ENCODE measurements at regions of chr2 and their contacts with region 1.

Region 1: DNA sequence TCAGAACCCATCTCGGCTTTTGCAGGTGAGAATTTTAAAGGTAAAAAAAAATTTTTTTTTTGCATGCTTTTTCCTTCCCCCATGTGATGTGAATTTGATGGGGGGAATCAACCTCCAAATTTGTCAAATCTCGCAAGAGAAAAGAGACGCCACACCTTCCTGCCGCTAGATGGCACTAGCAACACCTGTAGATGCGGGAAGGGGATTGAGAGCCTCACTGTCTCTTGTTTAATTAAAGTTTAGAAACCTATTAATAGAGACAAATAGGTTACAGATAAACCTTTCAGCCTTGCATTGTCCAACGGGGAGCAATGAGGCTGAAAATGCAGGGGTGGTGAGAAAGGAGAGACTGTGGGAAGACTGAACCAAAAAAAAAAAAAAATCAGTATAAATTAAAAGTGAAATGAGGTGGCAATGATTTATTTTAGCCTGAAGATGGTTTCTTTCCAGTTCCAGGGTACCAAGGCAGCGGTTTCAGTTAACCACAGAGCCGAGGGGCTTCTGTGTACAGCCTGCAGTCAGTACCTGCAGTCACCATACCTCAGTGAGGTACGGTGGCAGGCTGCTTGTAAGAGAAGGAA is 84.6 kb downstream of the NRP2 start:
- DNase-seq: peak; percentile 17
- H3K4me3 Mint-ChIP-seq: no peak overlapping the region
- H3K27ac Mint-ChIP-seq: no peak overlapping the region
- H3K4me1 Mint-ChIP-seq: no peaks in the 10 kb centered on the region
- H3K27me3 Mint-ChIP-seq: peaks cover 42% of the 10 kb centered on the region

Region 2: GRCh38 chr2:205451901-205452512 is 314.9 kb before region 1 on chr2:
- intact Hi-C with region 1: no loop called
- DNase-seq: no peak
- H3K4me3 Mint-ChIP-seq: no peak overlapping the region
- H3K27ac Mint-ChIP-seq: no peak overlapping the region
- H3K4me1 Mint-ChIP-seq: no peaks in the 10 kb centered on the region
- H3K27me3 Mint-ChIP-seq: peaks cover 3% of the 10 kb centered on the region

Region 3: DNA sequence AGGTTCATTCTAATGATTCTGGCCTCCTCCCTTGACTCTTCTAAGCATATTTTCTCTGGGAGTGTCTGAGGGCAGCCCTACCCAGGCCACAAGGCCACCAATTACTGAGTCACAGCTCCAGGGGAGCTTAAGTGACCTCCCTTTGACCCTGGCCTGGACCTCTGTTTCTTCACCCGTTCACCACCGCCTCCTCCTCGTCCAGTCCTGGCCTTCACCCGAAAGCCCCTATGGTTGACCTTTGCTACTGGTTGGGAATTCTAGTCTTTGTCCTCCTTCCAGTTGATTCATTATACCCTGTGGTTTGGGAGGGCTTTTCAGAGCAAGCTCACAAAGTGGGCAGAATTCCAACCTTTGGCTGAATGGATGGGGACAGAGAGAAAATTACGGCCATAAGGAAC is 11.9 kb before region 1 on chr2:
- intact Hi-C with region 1: no loop called
- DNase-seq: no peak
- H3K4me3 Mint-ChIP-seq: no peak overlapping the region
- H3K27ac Mint-ChIP-seq: no peak overlapping the region
- H3K4me1 Mint-ChIP-seq: no peaks in the 10 kb centered on the region
- H3K27me3 Mint-ChIP-seq: peaks cover 2% of the 10 kb centered on the region

Region 4: DNA sequence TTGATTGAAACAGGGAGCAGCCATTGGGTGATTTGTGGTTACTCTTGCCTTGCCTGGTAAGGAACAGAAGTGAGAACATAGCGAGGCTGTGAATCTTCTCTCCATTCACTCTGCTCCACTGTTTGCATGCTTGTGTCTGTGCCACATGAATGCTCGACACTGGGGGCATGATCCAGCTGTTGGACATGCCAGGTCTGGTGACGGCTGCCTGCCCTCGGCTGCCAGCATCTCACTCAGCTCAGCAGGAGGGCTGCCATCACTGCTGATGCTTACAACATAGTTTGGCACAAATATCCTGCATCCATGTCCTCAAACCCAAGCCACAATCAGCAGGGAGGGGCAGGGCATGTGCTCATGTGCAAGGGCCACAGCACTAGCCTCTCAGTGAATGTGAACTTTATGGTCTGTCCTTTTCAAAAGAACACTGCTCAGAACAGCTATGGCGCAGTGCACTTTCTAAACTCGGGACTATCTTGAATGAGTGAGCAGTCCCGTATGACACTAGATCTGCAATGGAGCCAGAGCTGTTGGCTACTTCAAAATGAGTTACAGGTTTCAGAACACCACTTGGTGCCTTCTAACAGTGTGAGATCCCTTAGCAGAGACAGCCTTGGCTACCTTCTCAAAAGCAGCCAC is 41.7 kb after region 1 on chr2:
- intact Hi-C with region 1: loop called (anchors 1 kb)
- DNase-seq: no peak
- H3K4me3 Mint-ChIP-seq: no peak overlapping the region
- H3K27ac Mint-ChIP-seq: no peak overlapping the region
- H3K4me1 Mint-ChIP-seq: no peaks in the 10 kb centered on the region
- H3K27me3 Mint-ChIP-seq: peaks cover 12% of the 10 kb centered on the region

Region 5: DNA sequence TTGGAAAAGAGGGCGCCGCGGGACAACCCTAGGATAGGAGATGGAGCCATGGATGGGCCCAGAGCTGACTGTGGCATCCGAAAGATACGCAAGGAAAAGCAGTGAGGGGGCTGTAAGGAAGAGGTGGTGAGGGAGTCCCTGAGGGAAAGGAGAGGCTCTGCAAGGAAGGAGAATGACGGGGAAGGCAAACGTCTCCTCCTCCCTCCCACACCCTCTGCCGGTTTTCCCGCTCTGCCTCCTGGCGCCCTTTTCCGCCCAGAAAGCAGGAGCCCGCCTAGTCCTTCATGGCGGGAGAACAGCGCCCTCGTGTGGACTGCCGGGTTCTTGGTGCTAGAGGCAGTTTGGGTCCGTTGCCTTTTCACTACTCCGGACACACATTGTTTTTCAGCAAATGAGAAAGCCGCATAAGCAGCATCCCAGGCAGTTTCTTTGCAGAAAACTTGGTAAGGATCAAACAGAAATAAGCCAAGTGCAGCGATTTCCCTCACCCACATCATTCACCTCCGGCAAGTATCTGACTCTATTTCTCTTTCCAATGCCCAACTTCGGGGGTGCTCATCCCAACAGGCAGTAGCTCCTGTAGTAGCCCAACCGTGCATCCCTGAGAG is 118.7 kb after region 1 on chr2:
- intact Hi-C with region 1: loop called (anchors 1 kb)
- DNase-seq: peak; percentile 37
- H3K4me3 Mint-ChIP-seq: no peak overlapping the region
- H3K27ac Mint-ChIP-seq: no peak overlapping the region
- H3K4me1 Mint-ChIP-seq: peaks cover 8% of the 10 kb centered on the region
- H3K27me3 Mint-ChIP-seq: peaks cover 10% of the 10 kb centered on the region

Region 6: DNA sequence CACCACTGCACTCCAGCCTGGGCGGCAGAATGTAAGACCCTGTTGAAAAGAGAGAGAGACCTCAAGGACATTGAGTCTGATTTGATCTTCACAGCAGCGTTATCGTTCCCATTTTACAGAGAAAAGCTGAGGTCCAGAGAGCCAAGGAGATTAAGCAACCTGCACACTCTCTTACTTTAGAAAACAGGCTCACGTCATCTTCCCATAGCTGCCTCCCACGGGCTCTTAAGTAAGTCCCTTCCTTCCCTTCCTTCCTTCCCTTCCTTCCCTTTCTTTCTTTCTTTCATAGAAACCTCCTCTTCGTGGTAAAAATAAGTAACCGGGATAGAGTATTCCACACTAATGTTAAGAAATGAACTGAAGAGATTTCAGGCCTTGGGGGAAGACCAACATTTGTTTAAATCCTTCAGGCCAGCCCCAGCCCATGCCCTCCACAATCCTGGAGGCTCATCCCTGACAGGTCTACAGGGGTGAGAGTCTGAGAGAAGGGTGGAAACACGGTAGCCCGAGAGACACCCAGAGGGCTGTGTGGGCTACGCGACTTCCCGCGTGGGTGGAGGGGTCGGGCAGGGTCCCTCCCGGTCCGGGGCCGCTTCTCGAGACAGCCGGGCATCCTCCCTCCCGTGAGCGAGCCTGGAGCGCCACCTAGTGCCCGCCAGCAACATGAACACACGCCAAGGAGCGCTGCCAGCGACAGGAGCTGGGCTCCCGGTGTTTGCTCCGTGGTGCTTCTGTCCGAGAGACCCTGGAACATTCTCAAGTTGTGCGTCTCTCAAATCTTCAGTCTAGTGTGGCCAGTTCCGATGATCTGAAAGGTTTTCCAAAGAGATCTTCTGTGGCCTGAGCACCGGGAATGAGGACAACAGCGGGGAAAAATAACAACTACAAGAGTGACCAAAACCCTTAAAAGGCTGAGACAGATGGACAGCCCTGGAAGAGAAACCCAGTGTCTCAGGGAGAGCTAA is 158.8 kb after region 1 on chr2:
- intact Hi-C with region 1: loop called (anchors 1 kb)
- DNase-seq: peak; percentile 46
- H3K4me3 Mint-ChIP-seq: peak overlapping the region; percentile 4
- H3K27ac Mint-ChIP-seq: no peak overlapping the region
- H3K4me1 Mint-ChIP-seq: peaks cover 14% of the 10 kb centered on the region
- H3K27me3 Mint-ChIP-seq: peaks cover 30% of the 10 kb centered on the region

Region 7: DNA sequence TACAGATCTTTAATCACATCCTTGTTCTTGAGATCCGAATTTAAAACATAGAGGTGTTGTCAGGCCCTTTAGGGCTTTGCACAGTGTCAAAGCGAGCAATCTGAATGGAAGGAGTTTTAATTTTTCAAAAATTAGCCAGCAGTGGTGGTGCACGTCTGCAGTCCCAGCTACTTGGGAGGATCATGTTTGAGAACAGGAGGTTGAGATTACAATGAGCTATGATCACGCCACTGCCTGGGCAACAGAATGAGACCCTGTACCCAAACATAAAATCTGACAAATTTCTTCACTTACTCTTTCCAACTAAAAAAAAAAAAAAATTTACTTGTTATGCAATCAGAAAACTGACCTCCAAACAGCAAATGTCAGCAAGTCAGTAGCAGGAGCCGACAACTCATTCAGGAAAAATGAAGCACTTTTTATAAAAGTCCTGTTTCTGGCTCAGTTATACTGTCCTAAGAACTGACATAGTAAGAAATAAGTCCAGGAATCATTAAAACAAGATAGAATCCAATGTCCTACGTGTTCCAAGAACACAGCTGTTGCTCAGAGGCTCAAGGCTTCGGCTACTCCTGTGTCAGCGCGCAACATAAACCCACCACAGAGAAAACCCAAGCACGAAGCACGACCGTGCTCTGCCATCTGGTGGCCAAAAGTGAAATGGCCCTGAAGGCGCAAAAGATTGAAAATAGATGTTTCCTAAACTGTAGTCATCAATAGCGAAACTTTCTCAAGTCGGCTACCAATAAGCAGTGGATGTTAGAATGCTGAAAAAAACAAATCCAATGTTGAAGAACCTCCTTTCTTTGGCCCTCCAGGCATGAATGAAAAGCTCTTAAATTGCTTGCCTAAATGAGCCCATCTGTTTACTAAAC is 181.0 kb after region 1 on chr2:
- intact Hi-C with region 1: loop called (anchors 5 kb)
- DNase-seq: peak; percentile 16
- H3K4me3 Mint-ChIP-seq: no peak overlapping the region
- H3K27ac Mint-ChIP-seq: no peak overlapping the region
- H3K4me1 Mint-ChIP-seq: peaks cover 7% of the 10 kb centered on the region
- H3K27me3 Mint-ChIP-seq: peaks cover 7% of the 10 kb centered on the region